PC-3 (cell line): ENCODE measurements at regions of chr6 and their contacts with region 1.

Region 1: GRCh38 chr6:127690092-127690491 is 113.1 kb downstream of the C6orf58 start:
- DNase-seq: peak; percentile 40
- ATAC-seq: peak; percentile 37; the same call in 1 of the 2 replicates
- H3K4me3 ChIP-seq: no peak overlapping the region
- H3K27ac ChIP-seq: no peak overlapping the region
- H3K4me1 ChIP-seq: no peaks in the 10 kb centered on the region
- H3K27me3 ChIP-seq: no peaks in the 10 kb centered on the region
- CTCF ChIP-seq: peak; percentile 66

Region 2: GRCh38 chr6:127554435-127555006 is 135.6 kb before region 1 on chr6:
- CTCF ChIA-PET with region 1: interaction called, 4 read pairs
- POLR2A ChIA-PET with region 1: no interaction called
- intact Hi-C with region 1: loop called (anchors 1 kb)
- DNase-seq: peak; percentile 62
- ATAC-seq: peak; percentile 77
- H3K4me3 ChIP-seq: no peak overlapping the region
- H3K27ac ChIP-seq: no peak overlapping the region
- H3K4me1 ChIP-seq: no peaks in the 10 kb centered on the region
- H3K27me3 ChIP-seq: no peaks in the 10 kb centered on the region
- CTCF ChIP-seq: peak; percentile 72

Region 3: GRCh38 chr6:127606131-127606562 is 83.9 kb before region 1 on chr6:
- CTCF ChIA-PET with region 1: interaction called, 3 read pairs
- POLR2A ChIA-PET with region 1: no interaction called
- intact Hi-C with region 1: loop called (anchors 2 kb)
- DNase-seq: peak; percentile 61
- ATAC-seq: peak; percentile 65
- H3K4me3 ChIP-seq: no peak overlapping the region
- H3K27ac ChIP-seq: no peak overlapping the region
- H3K4me1 ChIP-seq: peaks cover 7% of the 10 kb centered on the region
- H3K27me3 ChIP-seq: no peaks in the 10 kb centered on the region
- CTCF ChIP-seq: peak; percentile 64

Region 4: DNA sequence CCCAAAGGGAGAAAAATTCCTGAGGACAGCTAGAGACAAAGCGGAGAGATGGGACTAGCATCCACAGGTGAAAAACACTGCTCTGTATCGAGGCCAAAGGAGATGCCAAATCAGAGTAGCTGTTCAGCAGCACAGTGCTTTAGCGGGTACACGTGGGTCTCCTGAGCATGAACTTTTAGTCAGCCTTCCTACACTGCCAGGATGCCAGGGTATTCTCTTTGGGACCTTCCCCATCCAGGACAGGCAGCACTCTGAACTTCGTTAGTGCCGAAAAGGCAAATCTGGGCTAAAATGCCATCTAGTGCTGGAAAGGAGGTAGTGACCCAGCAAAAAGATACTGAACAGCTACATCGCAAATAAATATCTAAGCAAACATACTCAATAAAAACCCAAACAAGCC is 48.2 kb before region 1 on chr6:
- CTCF ChIA-PET with region 1: interaction called, 5 read pairs
- POLR2A ChIA-PET with region 1: no interaction called
- intact Hi-C with region 1: loop called (anchors 2 kb)
- DNase-seq: peak; percentile 64
- ATAC-seq: peak; percentile 70
- H3K4me3 ChIP-seq: no peak overlapping the region
- H3K27ac ChIP-seq: no peak overlapping the region
- H3K4me1 ChIP-seq: no peaks in the 10 kb centered on the region
- H3K27me3 ChIP-seq: no peaks in the 10 kb centered on the region
- CTCF ChIP-seq: peak; percentile 62

Region 5: GRCh38 chr6:127737009-127737486 is 47.0 kb after region 1 on chr6:
- CTCF ChIA-PET with region 1: no interaction called
- POLR2A ChIA-PET with region 1: no interaction called
- intact Hi-C with region 1: no loop called
- DNase-seq: peak; percentile 71
- ATAC-seq: peak; percentile 87
- H3K4me3 ChIP-seq: no peak overlapping the region
- H3K27ac ChIP-seq: no peak overlapping the region
- H3K4me1 ChIP-seq: no peaks in the 10 kb centered on the region
- H3K27me3 ChIP-seq: peaks cover 14% of the 10 kb centered on the region; the same call in 1 of the 2 replicates
- CTCF ChIP-seq: peak; percentile 75